A673 (cell line): ENCODE measurements at regions of chr21 and their contacts with region 1.

Region 1: DNA sequence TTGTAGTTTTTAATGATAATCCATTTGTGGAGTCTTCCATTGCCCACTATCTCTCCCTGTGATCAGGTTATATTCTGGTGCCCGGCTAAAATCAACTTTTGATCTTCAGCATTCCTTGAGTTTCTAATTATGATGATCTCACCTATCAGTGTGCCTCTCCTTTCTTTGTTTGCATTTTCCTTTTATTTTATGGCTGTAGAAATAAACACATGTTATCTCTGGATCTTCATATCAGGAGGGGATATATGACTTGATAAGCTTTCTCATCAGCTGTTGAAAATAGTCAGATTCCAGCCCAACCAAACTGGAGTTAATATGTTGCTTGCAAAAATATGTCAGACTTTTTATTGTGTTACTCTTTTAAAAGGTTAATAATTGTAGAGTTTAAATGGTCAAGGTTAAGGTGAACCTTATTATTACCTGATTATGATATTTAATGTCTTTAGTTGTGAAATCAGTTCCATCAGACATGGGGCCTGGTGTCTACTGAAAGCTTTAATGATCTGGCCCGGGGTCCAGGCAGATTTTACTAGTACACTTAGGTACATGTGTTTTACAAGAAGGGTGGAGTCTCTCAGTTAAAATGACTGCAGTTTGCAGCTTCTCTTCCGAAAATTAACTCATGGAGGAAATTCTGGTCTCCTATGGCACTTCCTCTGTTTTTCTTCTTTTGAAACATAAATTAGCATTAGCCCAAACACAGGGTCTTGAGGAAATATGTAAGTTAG is 12.8 kb downstream of the KRTAP24-1 start:
- DNase-seq: no peak
- H3K4me3 ChIP-seq: no peak overlapping the region
- H3K27ac ChIP-seq: no peak overlapping the region
- H3K4me1 ChIP-seq: no peaks in the 10 kb centered on the region
- H3K27me3 ChIP-seq: no peaks in the 10 kb centered on the region
- CTCF ChIP-seq: no peak

Region 2: DNA sequence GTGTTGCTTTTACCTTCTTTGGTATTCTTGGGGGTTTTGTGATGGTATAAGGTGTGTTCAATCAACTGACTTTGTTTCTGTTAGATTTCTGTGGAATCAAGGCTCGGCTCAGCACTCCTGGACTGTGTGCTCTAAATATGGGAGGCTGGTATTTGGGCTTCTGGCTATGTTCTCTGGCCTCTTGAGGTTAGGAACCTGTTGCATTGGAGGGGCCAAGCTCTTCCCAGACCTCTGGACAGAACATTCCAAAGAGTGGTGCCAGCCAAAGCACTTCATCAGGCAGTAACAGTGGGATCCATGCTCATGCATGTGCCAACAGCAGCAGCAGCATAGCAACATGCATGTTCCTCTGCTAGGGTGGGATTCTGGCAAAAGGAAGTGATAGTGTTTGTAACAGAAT is 282.8 kb after region 1 on chr21:
- CTCF ChIA-PET with region 1: no interaction called
- POLR2A ChIA-PET with region 1: interaction called, 21 read pairs
- intact Hi-C with region 1: no loop called
- DNase-seq: no peak
- H3K4me3 ChIP-seq: no peak overlapping the region
- H3K27ac ChIP-seq: no peak overlapping the region
- H3K4me1 ChIP-seq: no peaks in the 10 kb centered on the region
- H3K27me3 ChIP-seq: no peaks in the 10 kb centered on the region
- CTCF ChIP-seq: no peak